Activated CD4-positive, alpha-beta T cell treated with anti-CD3 and anti-CD28 coated beads, Interleukin-2, amount 10 ng/mL, durations not matched to agents 7 days and 5 days (primary cell): ENCODE measurements at regions of chr4 and their contacts with region 1.

Region 1: DNA sequence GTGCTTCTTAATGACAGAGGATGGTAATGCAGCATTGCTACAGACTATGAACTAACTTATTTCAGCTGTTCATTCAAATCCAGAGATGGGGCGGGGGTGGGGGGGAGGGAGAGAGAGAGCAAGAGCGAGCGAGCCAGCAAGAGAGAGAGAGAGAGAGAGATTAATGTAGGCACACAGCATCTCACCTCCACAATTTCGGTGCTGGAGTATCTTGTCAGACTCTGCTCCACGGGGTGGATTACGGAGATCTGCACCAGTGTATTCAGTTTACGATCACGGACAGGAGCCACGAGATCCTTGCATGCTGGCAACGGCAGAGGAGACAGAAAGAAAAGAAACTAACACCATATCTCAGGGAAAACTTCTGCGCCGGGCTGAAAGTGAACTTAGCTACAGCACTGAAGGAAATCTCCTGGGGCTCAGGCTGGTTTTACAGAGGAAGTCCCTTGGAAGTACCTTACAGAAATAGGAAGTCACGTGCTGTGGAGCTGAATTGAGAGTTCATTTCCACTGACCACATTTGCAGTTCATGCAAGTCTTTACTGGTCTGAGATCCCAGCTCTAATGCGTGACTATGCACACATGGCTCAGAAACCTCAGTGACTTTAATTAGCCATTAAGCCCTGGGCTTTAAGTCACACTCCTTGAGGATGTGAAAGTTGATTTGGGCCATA is 440.9 kb downstream of the INPP4B start:
- DNase-seq: peak; percentile 72
- H3K4me3 Mint-ChIP-seq: peak overlapping the region; percentile 92
- H3K27ac Mint-ChIP-seq: peak overlapping the region; percentile 95
- H3K4me1 Mint-ChIP-seq: peaks cover 70% of the 10 kb centered on the region
- H3K27me3 Mint-ChIP-seq: no peaks in the 10 kb centered on the region

Region 2: DNA sequence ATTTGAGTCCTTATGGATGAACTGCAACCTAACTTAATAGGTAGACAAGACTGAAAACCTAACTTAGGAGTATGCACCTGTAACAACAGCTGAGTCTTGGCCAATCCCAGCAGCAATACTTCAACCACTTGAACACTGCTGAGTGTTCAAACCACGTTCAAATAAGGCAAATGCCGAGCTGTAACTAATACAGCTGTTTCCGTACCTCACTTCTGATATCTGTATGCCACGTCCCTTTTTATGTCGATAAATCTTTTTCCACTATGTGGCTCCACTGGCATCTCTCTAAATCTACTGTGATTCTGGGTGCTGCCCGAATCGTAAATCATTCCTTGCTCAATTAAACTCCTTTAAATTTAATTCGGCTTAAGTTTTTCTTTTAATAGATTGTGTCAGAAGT is 18.7 kb before region 1 on chr4:
- CTCF ChIA-PET with region 1: interaction called, 11 read pairs
- POLR2A ChIA-PET with region 1: no interaction called
- DNase-seq: no peak
- H3K4me3 Mint-ChIP-seq: peak overlapping the region; percentile 19
- H3K27ac Mint-ChIP-seq: peak overlapping the region; percentile 25
- H3K4me1 Mint-ChIP-seq: peaks cover 50% of the 10 kb centered on the region
- H3K27me3 Mint-ChIP-seq: no peaks in the 10 kb centered on the region

Region 3: DNA sequence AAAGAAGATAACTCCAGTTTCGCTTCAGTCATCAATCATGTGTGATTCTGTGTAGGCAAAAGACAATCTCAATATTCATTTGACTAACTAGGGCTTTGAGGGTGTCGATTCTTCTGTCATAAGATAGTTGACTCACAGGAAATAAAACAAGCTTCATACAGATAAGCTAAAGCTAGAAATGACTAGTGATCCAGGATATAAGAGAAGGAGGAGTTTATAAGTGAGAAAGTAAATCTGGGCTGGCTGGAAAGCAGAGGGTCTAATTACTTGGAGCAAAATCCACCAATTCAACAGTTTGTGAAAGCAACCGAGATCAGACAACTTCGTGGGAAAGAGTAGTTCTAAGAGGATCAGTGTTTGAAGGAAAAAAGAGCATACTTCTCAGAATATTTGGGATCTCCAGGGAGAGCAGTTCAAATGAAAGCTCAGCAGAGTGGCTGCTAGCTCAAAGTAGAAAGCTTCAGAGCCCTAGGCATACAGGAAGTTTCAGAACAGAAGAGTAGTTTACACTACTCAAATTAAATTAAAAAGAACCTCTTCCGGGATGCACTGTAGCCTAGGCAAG is 11.6 kb after region 1 on chr4:
- CTCF ChIA-PET with region 1: interaction called, 14 read pairs
- POLR2A ChIA-PET with region 1: interaction called, 38 read pairs
- DNase-seq: peak; percentile 20
- H3K4me3 Mint-ChIP-seq: peak overlapping the region; percentile 47
- H3K27ac Mint-ChIP-seq: peak overlapping the region; percentile 97
- H3K4me1 Mint-ChIP-seq: peaks cover 50% of the 10 kb centered on the region
- H3K27me3 Mint-ChIP-seq: no peaks in the 10 kb centered on the region

Region 4: GRCh38 chr4:142567199-142567598 is 162.0 kb after region 1 on chr4:
- CTCF ChIA-PET with region 1: no interaction called
- POLR2A ChIA-PET with region 1: interaction called, 11 read pairs
- DNase-seq: peak; percentile 70
- H3K4me3 Mint-ChIP-seq: peak overlapping the region; percentile 84
- H3K27ac Mint-ChIP-seq: peak overlapping the region; percentile 94
- H3K4me1 Mint-ChIP-seq: peaks cover 66% of the 10 kb centered on the region
- H3K27me3 Mint-ChIP-seq: no peaks in the 10 kb centered on the region